Motor neuron (in vitro differentiated cells): ENCODE measurements at regions of chr21 and their contacts with region 1.

Region 1: DNA sequence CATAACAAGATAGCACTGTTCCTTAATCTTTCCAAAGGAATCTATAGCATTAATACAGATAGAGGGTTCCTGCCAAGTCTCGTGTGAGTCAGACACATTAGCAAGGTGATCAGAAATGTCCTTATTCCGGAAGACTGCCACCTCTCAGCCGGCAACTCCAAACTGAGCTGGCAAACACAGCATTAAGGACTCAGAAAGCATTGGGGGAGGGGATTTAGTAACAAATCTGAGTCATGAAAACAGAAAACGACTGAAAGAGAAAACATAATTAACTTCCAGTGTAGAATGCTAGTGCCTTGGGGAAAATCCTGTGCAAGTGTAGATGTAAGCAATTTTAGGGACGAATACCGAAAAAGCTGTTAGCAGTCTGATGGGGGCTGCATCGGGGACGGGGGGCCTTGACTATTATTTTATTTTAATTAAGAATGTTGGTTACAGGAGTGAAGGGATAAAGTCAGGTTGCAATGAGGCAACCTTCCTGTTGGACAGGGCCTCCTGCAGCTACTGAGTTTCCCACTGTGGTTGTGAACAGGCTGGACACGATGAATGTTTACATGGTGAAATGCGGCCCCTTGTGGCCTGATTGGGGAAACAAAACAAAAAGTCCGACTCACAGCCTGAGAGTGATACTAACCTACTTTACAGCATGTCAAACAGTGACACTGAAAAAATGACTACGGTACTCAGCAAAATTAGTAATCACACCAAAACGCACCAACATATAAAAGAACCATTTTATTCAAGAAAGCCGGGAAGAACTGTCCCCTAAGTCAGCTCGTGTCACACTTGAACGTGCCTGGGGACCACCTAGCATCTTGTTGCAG is 20.7 kb downstream of the MIS18A start:
- ATAC-seq: peak; percentile 62 to 92 (median 70)
- H3K4me3 ChIP-seq: no peak overlapping the region
- H3K27ac ChIP-seq: no peak overlapping the region
- H3K4me1 ChIP-seq: peaks cover 17 to 18% of the 10 kb centered on the region in 2 donors

Region 2: GRCh38 chr21:31781737-31782136 is 476.4 kb before region 1 on chr21:
- in situ Hi-C with region 1: loop called in 5 of 9 experiments (anchors 25 kb)
- ATAC-seq: peak in 5 of 8 experiments; percentile 50 to 66 (median 63)
- H3K4me3 ChIP-seq: no peak overlapping the region
- H3K27ac ChIP-seq: no peak overlapping the region
- H3K4me1 ChIP-seq: peaks cover 0 to 2% of the 10 kb centered on the region in 2 donors

Region 3: GRCh38 chr21:31888936-31889371 is 369.2 kb before region 1 on chr21:
- in situ Hi-C with region 1: loop called in 1 of 9 experiments (anchors 25 kb)
- ATAC-seq: peak in 3 of 8 experiments; percentile 43 to 88 (median 57)
- H3K4me3 ChIP-seq: no peak overlapping the region
- H3K27ac ChIP-seq: no peak overlapping the region
- H3K4me1 ChIP-seq: peaks cover 0 to 5% of the 10 kb centered on the region in 2 donors

Region 4: GRCh38 chr21:31964692-31965091 is 293.5 kb before region 1 on chr21:
- in situ Hi-C with region 1: no loop called
- ATAC-seq: no peak
- H3K4me3 ChIP-seq: no peak overlapping the region
- H3K27ac ChIP-seq: no peak overlapping the region
- H3K4me1 ChIP-seq: peaks cover 0 to 2% of the 10 kb centered on the region in 2 donors

Region 5: GRCh38 chr21:31983120-31983519 is 275.1 kb before region 1 on chr21:
- in situ Hi-C with region 1: no loop called
- ATAC-seq: no peak
- H3K4me3 ChIP-seq: no peak overlapping the region
- H3K27ac ChIP-seq: no peak overlapping the region
- H3K4me1 ChIP-seq: no peaks in the 10 kb centered on the region

Region 6: GRCh38 chr21:32878661-32879060 is 620.5 kb after region 1 on chr21:
- in situ Hi-C with region 1: no loop called
- ATAC-seq: no peak
- H3K4me3 ChIP-seq: no peak overlapping the region
- H3K27ac ChIP-seq: no peak overlapping the region
- H3K4me1 ChIP-seq: peaks cover 0 to 2% of the 10 kb centered on the region in 2 donors